ENCODE measurements at regions of chr1 and their contacts with region 1.

Region 1: GRCh38 chr1:13828454-13829151 is 128.6 kb downstream of the PRDM2 start:
- DNase-seq: no peak
- ATAC-seq: peak; percentile 68 to 74 (median 70)
- H3K4me3 ChIP-seq: no peak overlapping the region
- H3K27ac ChIP-seq: no peak overlapping the region
- H3K4me1 ChIP-seq: peaks cover 0 to 7% (median 0%) of the 10 kb centered on the region in 4 donors
- H3K27me3 ChIP-seq: no peaks in the 10 kb centered on the region
- CTCF ChIP-seq: peak; percentile 46 to 57 (median 49)
- POLR2A ChIP-seq: no peak

Region 2: DNA sequence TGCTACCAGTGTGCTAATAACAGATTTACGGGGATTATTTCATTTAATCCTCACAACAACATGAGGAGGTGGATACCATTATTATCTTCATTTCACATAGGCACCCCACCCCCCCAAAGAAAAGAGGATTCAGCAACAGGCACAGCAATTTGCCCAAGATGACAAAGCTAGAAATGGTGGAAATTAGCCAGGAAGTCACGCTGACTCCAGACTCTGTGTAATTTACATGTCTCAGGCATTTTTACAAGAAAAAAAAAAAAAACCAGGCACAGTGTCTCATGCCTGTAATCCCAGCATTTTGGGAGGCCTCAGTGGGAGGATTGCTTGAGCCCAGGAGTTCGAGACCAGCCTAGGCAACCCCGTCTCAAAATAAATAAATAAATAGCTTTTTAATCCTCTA is 166.1 kb before region 1 on chr1:
- intact Hi-C with region 1: loop called in 1 of 2 experiments (anchors 10 kb)
- DNase-seq: no peak
- ATAC-seq: no peak
- H3K4me3 ChIP-seq: no peak overlapping the region
- H3K27ac ChIP-seq: no peak overlapping the region
- H3K4me1 ChIP-seq: no peaks in the 10 kb centered on the region
- H3K27me3 ChIP-seq: no peaks in the 10 kb centered on the region
- CTCF ChIP-seq: no peak
- POLR2A ChIP-seq: no peak

Region 3: DNA sequence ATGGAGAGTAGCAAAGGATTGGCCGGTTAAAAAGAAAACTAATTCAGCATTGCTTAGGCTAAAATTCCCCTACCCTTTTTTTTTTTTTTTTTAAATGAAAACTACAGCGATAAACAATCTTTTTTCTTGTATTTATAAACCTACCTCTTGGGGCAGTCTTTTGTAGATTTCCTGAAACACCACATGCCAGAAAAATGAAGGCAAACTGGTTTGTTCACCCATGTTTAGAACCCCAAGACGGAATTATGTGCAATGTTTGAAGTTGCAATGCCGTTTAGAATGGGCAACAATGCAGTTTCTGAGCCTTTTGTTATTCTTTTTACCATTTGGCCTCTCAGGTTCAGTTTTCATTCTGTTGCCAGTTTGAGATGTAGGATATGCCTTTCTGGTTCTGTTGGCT is 69.5 kb before region 1 on chr1:
- intact Hi-C with region 1: no loop called
- DNase-seq: no peak
- ATAC-seq: no peak
- H3K4me3 ChIP-seq: no peak overlapping the region
- H3K27ac ChIP-seq: no peak overlapping the region
- H3K4me1 ChIP-seq: peaks cover 0 to 20% (median 9%) of the 10 kb centered on the region in 4 donors
- H3K27me3 ChIP-seq: no peaks in the 10 kb centered on the region
- CTCF ChIP-seq: no peak
- POLR2A ChIP-seq: no peak

Measured in right lobe of liver (tissue), 6 donors.